Activated B cell treated with CpG ODN at 0.5 μM for 24 hours (primary cell): ENCODE measurements at regions of chr15 and their contacts with region 1.

Region 1: DNA sequence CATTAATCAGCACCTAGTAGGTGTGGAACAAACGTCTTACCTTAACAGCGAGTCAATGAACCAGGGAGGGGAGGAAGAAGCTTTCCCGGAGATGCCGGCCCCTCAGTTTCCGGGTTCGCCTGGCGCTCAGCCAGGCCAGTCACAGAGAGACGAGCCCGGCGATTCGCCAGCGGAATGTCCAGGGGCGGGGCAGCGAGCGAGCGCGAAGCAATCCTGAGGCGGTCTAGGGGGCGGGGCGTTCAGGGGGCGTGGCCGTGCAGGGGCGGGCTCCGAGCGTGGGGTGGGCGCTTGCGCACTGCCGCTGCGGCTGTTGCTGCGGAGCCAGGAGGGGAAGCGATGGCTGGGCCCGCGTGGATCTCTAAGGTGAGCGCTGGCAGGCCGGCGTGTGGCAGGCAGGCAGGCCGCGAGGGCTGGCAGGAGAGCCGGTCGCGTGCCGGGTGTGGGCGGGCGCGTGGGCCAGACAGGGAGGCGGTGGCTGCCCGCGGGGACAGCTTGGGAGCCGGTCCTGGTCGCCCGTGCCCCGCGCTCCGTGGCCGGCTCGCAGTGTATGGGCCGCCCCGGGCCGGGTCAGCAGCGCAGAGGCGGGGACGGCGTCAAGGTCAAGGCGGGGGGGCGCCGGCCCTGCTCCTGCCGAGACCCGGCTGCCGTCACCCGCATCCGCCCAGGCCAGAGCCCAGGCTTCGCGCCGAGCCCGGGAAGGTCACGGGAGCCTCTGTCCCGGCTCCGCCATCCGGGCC is at the start of gene IDH3A:
- DNase-seq: peak; percentile 99
- ATAC-seq: peak; percentile 97
- H3K4me3 Mint-ChIP-seq: peak within 1 kb of the TSS; percentile 94
- H3K27ac Mint-ChIP-seq: peak within 1 kb of the TSS; percentile 91
- H3K4me1 Mint-ChIP-seq: peaks cover 46% of the 10 kb centered on the region
- H3K27me3 Mint-ChIP-seq: no peaks in the 10 kb centered on the region
- CTCF ChIP-seq: no peak
- total RNA-seq, gene IDH3A: 111 and 124 TPM in 2 replicates

Region 2: GRCh38 chr15:77070495-77071304 is 1078.5 kb before region 1 on chr15 and contains the start of gene TSPAN3:
- CTCF ChIA-PET with region 1: no interaction called
- POLR2A ChIA-PET with region 1: no interaction called
- intact Hi-C with region 1: loop called (anchors 10 kb)
- DNase-seq: peak; percentile 95
- ATAC-seq: peak; percentile 95
- H3K4me3 Mint-ChIP-seq: peak within 1 kb of the TSS; percentile 89
- H3K27ac Mint-ChIP-seq: peak within 1 kb of the TSS; percentile 81
- H3K4me1 Mint-ChIP-seq: peaks cover 50% of the 10 kb centered on the region
- H3K27me3 Mint-ChIP-seq: no peaks in the 10 kb centered on the region
- CTCF ChIP-seq: no peak
- total RNA-seq, gene TSPAN3: 104 and 113 TPM in 2 replicates

Region 3: GRCh38 chr15:78212546-78213424 is 63.5 kb after region 1 on chr15:
- CTCF ChIA-PET with region 1: no interaction called
- POLR2A ChIA-PET with region 1: no interaction called
- intact Hi-C with region 1: no loop called
- DNase-seq: no peak
- ATAC-seq: no peak
- H3K4me3 Mint-ChIP-seq: no peak overlapping the region
- H3K27ac Mint-ChIP-seq: no peak overlapping the region
- H3K4me1 Mint-ChIP-seq: no peaks in the 10 kb centered on the region
- H3K27me3 Mint-ChIP-seq: peaks cover 10% of the 10 kb centered on the region
- CTCF ChIP-seq: no peak